Activated CD8-positive, alpha-beta T cell treated with anti-CD3 and anti-CD28 coated beads, Interleukin-2, amount 10 ng/mL, durations not matched to agents 7 days and 5 days (primary cell): ENCODE measurements at regions of chr1 and their contacts with region 1.

Region 1: DNA sequence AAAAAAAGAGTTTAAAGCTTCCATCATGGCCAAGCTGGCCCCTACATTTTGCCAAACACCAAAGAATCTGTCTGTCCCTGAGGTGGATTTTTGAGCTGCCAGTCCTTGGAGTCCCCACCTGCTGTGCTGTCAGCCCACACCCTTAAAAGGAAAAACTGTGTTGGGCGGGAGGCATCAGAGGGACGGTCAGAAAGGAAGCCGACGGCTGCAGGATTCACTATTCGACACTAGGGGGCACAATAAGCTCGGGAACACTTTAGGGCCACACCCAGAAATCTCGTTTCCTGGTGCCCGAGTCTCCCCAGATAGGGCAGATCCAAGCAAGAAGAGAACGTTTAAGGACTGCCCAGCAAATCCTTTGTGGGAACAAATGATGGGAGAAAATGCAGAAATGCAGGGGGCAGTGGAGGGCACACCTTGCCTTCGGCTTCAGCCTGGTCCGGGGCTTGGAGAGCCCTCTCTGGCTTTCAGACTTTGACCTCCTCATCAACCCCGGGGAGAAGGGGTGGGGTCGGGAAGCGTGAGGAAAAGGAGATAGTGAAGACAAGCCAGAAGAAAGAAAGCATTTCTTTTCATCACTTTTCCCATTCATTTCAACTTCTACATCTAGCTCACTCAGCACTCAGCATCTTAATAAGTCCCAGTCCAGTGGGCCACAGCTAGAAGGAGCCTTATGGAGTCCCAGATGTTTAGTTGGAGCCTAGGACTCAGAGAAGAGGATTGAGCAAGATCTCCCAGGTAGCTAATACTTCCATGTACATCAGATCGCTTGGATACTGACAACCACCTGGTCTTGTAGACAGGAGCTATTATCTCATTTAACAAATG is 5.0 kb upstream of the CTTNBP2NL start:
- DNase-seq: peak; percentile 88
- ATAC-seq: peak; percentile 90
- H3K4me3 Mint-ChIP-seq: peak overlapping the region; percentile 61
- H3K27ac Mint-ChIP-seq: no peak overlapping the region
- H3K4me1 Mint-ChIP-seq: peaks cover 22% of the 10 kb centered on the region
- H3K27me3 Mint-ChIP-seq: peaks cover 30% of the 10 kb centered on the region

Region 2: DNA sequence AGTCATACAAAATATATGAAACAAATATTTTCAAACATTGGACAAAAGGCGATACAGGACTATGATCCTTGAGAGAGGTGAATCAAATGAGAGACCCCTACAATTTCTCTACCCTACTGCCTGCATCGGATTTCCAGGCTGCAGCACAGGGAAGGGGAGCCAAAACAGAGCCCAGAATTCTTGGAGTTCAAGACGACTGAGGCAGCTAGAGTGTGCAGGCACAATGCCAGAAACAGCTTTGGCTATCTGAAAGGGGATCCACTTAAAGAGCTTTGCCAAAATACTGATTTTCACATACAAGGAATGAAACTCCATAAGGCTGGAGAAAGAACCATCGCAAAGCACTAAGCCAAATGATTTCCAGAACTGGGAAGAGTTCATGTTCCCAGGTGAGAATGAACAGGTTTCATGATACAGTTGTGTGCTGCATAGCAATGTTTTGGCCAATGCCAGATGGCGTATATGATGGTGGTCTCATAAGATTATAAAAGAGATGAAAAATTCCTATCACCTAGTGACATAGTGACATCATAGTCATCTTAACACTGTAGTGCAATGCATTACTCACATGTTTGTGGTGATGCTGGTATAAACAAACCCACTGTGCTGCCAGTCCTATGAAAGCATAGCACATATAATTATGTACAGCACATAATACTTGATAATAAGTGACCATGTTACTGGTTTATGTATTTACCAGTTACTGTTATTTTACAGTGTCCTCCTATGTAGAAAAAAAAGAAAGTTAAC is 479.0 kb before region 1 on chr1:
- CTCF ChIA-PET with region 1: no interaction called
- POLR2A ChIA-PET with region 1: no interaction called
- DNase-seq: no peak
- ATAC-seq: no peak
- H3K4me3 Mint-ChIP-seq: no peak overlapping the region
- H3K27ac Mint-ChIP-seq: no peak overlapping the region
- H3K4me1 Mint-ChIP-seq: no peaks in the 10 kb centered on the region
- H3K27me3 Mint-ChIP-seq: peaks cover 15% of the 10 kb centered on the region

Region 3: DNA sequence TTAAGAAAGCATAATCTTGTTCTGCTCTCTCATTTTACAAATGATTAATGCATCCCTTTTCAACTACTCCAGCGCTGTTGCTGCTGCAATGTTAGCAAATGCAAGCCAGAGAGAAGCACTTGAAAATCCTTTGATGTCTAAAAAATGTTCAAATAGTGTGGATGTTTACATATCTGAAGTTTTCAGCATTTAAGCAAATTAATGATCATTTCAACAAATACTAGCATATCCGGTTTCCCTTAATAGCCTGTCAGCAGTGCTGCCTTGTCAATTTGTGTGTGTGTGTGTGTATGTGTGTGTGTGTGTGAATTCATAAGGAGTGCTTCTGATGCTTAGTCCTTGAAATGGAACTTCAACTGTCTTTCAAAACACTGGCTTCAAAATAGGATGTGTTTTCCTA is 69.6 kb after region 1 on chr1:
- CTCF ChIA-PET with region 1: interaction called, 126 read pairs
- POLR2A ChIA-PET with region 1: interaction called, 4 read pairs
- DNase-seq: no peak
- ATAC-seq: no peak
- H3K4me3 Mint-ChIP-seq: no peak overlapping the region
- H3K27ac Mint-ChIP-seq: no peak overlapping the region
- H3K4me1 Mint-ChIP-seq: peaks cover 2% of the 10 kb centered on the region
- H3K27me3 Mint-ChIP-seq: peaks cover 25% of the 10 kb centered on the region

Region 4: GRCh38 chr1:112501810-112502641 is 111.0 kb after region 1 on chr1:
- CTCF ChIA-PET with region 1: interaction called, 13 read pairs
- POLR2A ChIA-PET with region 1: no interaction called
- DNase-seq: peak; percentile 64
- ATAC-seq: peak; percentile 78
- H3K4me3 Mint-ChIP-seq: peak overlapping the region; percentile 54
- H3K27ac Mint-ChIP-seq: no peak overlapping the region
- H3K4me1 Mint-ChIP-seq: peaks cover 8% of the 10 kb centered on the region
- H3K27me3 Mint-ChIP-seq: peaks cover 59% of the 10 kb centered on the region

Region 5: DNA sequence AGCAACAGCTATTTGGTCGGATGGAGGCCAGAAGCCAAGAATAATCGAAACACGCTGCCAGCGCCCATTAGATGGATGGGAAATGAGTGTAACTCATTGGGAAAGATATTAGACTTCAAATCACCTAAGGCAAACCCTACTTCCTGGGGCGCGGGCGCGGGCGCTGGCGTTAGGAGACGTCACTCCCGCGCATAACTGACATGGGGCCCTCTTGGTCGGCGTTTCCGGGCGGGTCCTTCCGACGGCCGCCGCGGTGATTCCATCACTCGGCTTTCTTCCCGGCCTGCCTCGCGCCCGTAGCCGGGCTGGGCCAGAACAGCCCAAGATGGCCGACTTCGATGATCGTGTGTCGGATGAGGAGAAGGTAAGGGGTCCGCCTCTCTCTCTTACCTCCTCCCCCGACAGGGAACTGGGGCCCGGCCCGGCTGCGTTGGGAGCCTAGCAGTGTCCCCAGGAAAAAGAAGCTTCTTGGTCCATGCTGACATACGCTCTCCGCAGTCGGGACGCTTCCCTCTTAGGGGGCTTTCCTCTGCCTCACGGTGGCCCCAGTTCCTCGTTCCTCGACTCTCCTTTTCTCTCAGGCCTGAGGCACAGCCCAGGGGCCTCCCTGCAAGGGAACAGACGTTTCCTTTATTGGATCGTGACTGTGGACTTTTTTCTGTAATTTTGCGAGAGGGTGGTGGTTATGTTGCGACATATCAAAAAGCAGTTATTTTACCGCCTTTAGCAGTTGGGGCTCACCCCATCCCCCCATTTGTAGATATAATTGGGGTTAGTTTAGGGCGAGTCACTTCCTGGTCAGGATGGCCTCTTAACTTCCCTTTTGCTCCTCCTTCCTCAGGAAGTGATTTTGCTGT is 228.8 kb after region 1 on chr1 and contains the start of gene CAPZA1:
- CTCF ChIA-PET with region 1: interaction called, 71 read pairs
- POLR2A ChIA-PET with region 1: no interaction called
- DNase-seq: peak; percentile 95
- ATAC-seq: peak; percentile 80
- H3K4me3 Mint-ChIP-seq: peak within 1 kb of the TSS; percentile 100
- H3K27ac Mint-ChIP-seq: peak within 1 kb of the TSS; percentile 100
- H3K4me1 Mint-ChIP-seq: peaks cover 36% of the 10 kb centered on the region
- H3K27me3 Mint-ChIP-seq: no peaks in the 10 kb centered on the region
- total RNA-seq, gene CAPZA1: 279 to 280 TPM

Region 6: DNA sequence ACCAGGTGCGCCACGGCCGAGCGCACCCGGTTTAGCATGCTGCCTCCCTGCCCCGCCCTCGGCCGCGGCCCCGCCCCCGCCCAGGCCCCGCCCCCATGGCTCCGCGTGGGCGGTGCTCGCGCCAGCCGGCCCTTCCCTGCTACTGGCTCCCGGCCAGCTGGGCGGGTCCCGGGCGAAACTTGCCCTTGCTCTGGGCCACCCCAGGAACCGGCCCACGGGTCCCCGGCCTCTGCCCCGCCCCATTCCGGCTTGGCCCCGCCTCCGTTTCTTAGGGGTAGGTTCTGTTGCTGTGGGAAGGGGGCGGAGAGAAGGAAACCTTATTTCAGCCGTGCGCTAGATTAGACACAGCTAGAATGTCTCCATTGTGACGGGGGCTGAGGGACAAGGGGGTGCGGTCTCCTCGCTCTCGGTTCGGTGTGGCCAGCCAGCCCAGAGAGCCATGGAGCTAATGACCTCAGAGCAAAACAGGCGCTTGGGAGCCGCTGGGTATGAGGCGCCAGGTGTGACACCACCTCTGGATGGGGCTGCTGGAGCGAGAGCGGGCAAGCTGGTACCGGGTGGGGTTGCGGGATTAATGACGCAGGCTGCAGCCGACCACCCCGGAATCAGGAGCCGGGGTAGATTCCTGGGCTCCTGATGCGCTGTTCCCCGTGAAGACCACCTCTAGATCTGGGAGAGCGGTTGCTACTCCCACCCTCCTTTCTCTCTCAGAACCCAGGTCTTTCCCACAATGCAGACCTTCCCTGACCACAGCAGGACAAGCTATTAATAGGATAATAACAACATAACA is 324.5 kb after region 1 on chr1 and contains the start of gene PPM1J:
- CTCF ChIA-PET with region 1: interaction called, 49 read pairs
- POLR2A ChIA-PET with region 1: no interaction called
- DNase-seq: peak; percentile 98
- ATAC-seq: peak; percentile 93
- H3K4me3 Mint-ChIP-seq: peak within 1 kb of the TSS; percentile 81
- H3K27ac Mint-ChIP-seq: peak within 1 kb of the TSS; percentile 64
- H3K4me1 Mint-ChIP-seq: peaks cover 28% of the 10 kb centered on the region
- H3K27me3 Mint-ChIP-seq: peaks cover 38% of the 10 kb centered on the region
- total RNA-seq, gene PPM1J: not detected